ENCODE measurements at regions of chr3 and their contacts with region 1.

Region 1: DNA sequence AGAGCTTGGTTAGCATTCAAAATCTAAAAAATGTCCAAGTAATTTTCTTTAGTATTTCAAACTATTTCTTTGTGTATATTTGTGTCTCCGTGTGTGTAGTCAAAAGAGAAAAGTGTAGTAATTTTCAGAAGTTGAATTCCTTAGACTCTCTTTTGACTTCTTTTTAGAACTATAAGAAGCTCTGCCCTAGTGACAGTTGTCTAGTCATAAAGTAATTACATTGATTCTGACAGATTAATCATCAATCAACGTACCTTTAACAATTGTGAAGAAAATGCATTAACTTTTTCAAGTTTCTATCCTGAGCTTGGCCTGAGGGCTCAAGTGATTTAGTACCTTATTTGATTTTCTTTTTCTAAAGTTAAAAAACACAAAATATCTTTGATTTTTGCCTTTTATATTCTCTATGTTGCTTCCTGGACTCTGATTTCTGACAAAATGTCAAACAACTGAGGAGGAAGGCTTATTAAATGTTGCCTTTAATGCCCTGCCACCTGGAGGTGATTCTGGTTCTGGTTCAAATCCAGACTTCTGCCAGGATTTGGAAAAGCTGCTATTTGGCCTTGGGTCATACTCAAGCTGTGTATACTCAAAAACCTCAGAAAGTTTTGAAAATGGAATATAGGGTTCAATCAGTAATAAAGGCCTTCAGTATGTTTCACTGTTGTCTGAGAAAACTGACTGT is 653.6 kb downstream of the NSUN3 start:
- DNase-seq: no peak
- ATAC-seq: no peak

Region 2: DNA sequence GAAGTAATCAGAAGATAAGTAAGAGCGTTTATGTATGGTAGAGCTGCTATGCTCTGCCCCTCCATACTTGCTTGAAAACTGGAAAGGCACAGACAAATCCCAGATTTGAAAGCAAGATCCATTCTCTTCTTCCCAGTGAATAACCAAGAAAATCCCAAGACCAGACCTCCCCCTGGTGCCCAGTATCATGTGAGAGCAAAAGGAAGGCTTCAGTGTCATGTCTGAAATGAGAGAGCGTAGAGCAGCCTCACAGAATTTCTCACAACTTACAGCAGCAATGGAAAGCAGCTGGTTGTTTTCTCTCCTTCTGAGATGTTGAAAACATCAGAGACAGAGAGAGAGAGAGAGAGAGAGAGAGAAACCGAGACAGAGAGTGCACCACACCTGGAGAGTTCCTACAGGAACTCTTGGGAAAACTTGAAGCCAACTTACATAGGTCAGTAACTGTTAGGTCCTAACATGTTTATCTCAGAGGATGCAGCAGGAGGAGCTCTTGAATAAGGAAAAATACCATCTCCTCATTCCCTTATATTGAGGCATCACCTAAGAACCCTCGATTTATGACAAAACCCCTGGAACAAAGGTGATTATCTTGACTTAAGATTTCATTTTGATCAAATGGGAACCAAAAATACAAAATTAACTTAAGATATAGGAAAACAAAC is 380.3 kb before region 1 on chr3:
- intact Hi-C with region 1: loop called (anchors 5 kb)
- DNase-seq: no peak
- ATAC-seq: peak; percentile 83

Measured in Right ventricle myocardium superior (tissue), 1 donor.